ENCODE measurements at regions of chr16 and their contacts with region 1.

Region 1: DNA sequence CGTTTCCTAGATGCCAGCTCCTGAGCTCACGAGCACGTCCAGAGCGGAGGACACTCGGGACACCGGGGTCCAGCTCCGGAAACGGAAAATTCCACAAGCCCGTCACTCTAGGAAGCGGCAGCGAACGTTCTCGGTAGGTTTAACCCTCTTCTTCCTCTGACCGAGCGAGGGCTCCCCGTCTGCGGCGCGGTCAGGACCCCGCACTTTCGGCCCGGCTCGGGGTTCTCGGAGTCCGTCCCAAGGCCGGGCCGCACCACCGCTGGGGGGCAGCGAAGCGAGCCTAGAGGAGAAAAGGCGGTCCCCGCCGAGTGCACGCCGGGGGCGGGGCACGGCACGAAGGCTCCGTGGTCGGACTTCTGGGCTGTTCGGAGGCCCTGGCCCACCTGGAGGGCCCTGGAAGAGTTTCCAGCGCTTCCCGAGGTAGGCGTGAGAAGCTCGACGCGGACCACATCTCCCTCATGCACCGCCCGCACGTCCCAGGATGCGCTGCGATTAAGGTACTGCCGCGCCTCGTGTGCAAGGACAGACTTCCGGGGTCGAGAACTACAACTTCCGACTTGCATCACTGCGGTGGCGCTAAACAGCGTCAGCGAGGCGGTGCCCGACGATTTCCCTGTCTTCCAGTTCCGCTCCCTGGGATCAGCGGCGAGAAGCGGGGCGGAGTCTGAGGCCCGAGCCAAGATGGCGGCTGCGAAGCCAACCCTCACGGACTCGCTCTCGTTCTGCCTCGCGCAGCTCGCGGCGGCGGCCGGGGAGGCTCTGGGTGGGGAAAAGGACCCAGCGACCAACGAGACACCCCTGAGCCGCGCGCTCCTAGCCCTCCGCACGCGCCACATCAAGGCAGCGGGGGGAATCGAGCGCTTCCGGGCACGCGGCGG is at the start of gene ARMC5:
- DNase-seq: peak; percentile 98
- H3K4me3 Mint-ChIP-seq: peak within 1 kb of the TSS; percentile 92
- H3K27ac Mint-ChIP-seq: peak within 1 kb of the TSS; percentile 92
- H3K4me1 Mint-ChIP-seq: peaks cover 48% of the 10 kb centered on the region
- H3K27me3 Mint-ChIP-seq: no peaks in the 10 kb centered on the region
- total RNA-seq, gene ARMC5: 10.1 to 12.0 TPM

Region 2: GRCh38 chr16:31073968-31074813 is 384.9 kb before region 1 on chr16 and contains the starts of genes ZNF646 and ZNF668:
- CTCF ChIA-PET with region 1: interaction called, 3 read pairs
- POLR2A ChIA-PET with region 1: interaction called, 14 read pairs
- DNase-seq: peak; percentile 99
- H3K4me3 Mint-ChIP-seq: peak within 1 kb of the TSS; percentile 97
- H3K27ac Mint-ChIP-seq: peak within 1 kb of the TSS; percentile 94
- H3K4me1 Mint-ChIP-seq: peaks cover 39% of the 10 kb centered on the region
- H3K27me3 Mint-ChIP-seq: no peaks in the 10 kb centered on the region
- total RNA-seq, gene ZNF646: 31.9 to 32.1 TPM
- total RNA-seq, gene ZNF668: 13.9 to 17.4 TPM

Region 3: DNA sequence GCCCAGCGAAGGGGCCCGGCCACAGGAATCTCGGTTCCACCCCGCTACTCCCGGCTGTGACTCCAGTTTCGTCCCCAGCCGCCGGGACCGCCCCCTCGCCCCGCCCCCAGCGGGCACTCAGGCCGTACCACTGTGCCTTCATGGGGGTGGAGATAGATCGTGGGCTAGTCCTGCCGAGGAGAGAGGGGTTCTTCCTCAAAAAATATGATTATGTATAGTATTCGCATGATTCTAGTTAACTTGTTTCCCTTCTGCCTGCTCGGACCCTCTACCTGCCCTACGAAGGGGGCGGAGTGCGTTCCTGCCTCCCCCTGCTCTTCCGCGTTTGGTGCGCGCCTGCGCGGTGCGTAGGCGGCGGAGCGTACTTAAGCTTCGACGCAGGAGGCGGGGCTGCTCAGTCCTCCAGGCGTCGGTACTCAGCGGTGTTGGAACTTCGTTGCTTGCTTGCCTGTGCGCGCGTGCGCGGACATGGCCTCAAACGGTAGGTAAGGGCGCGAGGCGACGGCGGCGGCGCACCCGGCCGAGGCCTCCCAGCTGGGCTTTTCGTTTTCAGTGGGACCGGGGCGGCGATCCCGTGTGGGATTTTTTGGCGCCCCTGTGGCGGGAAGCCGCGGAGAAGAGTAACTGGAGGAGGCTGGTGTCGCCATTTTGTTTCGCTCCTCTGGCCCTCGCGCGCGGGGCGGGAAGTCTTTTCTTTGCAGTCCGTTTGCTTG is 279.2 kb before region 1 on chr16 and contains the start of gene FUS:
- CTCF ChIA-PET with region 1: interaction called, 3 read pairs
- POLR2A ChIA-PET with region 1: interaction called, 66 read pairs
- DNase-seq: peak; percentile 91
- H3K4me3 Mint-ChIP-seq: peak within 1 kb of the TSS; percentile 93
- H3K27ac Mint-ChIP-seq: peak within 1 kb of the TSS; percentile 98
- H3K4me1 Mint-ChIP-seq: peaks cover 53% of the 10 kb centered on the region
- H3K27me3 Mint-ChIP-seq: peaks cover 2% of the 10 kb centered on the region
- total RNA-seq, gene FUS: 386 to 397 TPM

Region 4: GRCh38 chr16:31344712-31345111 is 114.4 kb before region 1 on chr16:
- CTCF ChIA-PET with region 1: no interaction called
- POLR2A ChIA-PET with region 1: no interaction called
- DNase-seq: peak; percentile 38
- H3K4me3 Mint-ChIP-seq: no peak overlapping the region
- H3K27ac Mint-ChIP-seq: no peak overlapping the region
- H3K4me1 Mint-ChIP-seq: peaks cover 21% of the 10 kb centered on the region
- H3K27me3 Mint-ChIP-seq: peaks cover 49% of the 10 kb centered on the region

Region 5: DNA sequence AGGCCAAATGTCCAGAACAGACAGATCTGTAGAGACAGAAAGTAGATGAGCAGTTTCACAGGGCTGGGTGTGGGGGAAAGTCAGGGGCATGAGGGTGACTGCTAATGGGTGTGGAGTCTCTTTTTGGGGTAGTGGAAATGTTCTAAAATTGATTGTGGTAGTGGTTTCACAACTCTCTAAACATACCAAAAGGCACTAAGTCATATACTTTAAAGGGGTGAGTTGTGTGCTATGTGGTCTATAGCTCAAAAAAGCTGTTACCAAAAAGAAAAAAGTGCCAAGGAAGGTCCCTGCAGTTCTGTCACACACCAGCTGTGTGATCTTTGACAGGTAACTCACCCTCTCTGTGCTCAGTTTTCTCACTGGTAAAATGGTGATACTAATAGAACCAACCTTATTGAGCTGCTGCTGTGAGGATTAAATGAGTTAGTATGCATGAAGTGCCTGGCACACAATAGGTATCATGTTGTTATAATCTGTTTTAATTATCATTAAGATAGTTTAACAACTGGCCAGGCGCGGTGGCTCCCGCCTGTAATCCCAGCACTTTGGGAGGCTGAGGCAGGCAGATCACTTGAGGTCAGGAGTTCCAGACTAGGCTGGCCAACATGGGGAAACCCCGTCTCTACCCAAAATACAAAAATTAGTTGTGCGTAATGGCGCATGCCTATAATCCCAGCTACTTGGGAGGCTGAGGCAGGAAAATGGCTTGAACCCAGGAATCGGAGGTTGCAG is 93.8 kb before region 1 on chr16:
- CTCF ChIA-PET with region 1: no interaction called
- POLR2A ChIA-PET with region 1: no interaction called
- DNase-seq: no peak
- H3K4me3 Mint-ChIP-seq: no peak overlapping the region
- H3K27ac Mint-ChIP-seq: peak overlapping the region; percentile 36
- H3K4me1 Mint-ChIP-seq: peaks cover 31% of the 10 kb centered on the region
- H3K27me3 Mint-ChIP-seq: no peaks in the 10 kb centered on the region

Region 6: GRCh38 chr16:31440516-31441184 is 18.4 kb before region 1 on chr16:
- CTCF ChIA-PET with region 1: interaction called, 14 read pairs
- POLR2A ChIA-PET with region 1: interaction called, 14 read pairs
- DNase-seq: no peak
- H3K4me3 Mint-ChIP-seq: no peak overlapping the region
- H3K27ac Mint-ChIP-seq: no peak overlapping the region
- H3K4me1 Mint-ChIP-seq: peaks cover 26% of the 10 kb centered on the region
- H3K27me3 Mint-ChIP-seq: no peaks in the 10 kb centered on the region

Region 7: GRCh38 chr16:31487720-31488467 is 28.8 kb after region 1 on chr16:
- CTCF ChIA-PET with region 1: interaction called, 10 read pairs
- POLR2A ChIA-PET with region 1: interaction called, 4 read pairs
- DNase-seq: peak; percentile 66
- H3K4me3 Mint-ChIP-seq: peak overlapping the region; percentile 80
- H3K27ac Mint-ChIP-seq: no peak overlapping the region
- H3K4me1 Mint-ChIP-seq: peaks cover 12% of the 10 kb centered on the region
- H3K27me3 Mint-ChIP-seq: peaks cover 7% of the 10 kb centered on the region

Region 8: DNA sequence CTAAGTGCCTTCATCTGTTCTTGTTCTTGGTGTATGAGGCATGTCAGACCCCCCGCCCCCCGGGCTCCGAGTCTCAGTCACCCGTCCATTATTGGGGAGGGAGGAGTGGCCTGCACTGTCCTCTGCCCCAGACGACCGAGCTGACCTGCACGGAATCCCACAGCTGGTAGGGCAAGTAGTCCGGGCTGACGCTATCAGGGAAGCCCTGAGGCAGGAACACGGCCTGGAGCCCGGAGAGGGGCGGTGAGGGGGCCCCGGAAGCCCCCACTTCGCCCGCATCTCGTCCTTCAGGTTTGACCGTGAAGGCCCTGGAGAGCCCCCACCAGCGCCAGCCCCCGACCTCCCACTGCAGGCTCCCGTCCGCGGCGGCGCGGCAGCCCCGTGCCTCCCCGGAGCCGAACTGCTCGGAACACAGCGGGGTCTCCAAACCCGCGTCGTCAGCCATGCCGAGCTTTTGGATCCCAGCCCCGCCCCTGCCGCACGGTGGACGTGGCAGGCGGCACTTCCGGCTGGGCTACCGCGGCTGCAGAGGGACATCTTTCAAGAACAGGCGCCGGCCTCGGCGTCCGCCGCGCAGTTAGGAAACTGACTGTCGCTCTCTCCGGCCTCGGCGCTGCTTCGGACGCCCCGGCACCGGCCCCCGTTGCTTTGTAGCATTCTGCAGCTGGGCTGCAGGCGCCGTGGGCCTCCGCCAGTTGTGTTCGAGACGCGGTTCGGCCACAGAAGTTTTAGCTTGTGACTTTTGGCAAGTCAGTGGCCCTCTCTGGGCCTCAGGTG is 49.0 kb after region 1 on chr16 and contains the start of gene RUSF1:
- CTCF ChIA-PET with region 1: interaction called, 13 read pairs
- POLR2A ChIA-PET with region 1: interaction called, 30 read pairs
- DNase-seq: peak; percentile 89
- H3K4me3 Mint-ChIP-seq: peak within 1 kb of the TSS; percentile 91
- H3K27ac Mint-ChIP-seq: peak within 1 kb of the TSS; percentile 91
- H3K4me1 Mint-ChIP-seq: peaks cover 45% of the 10 kb centered on the region
- H3K27me3 Mint-ChIP-seq: no peaks in the 10 kb centered on the region
- total RNA-seq, gene RUSF1: 36.8 to 37.9 TPM

Region 9: DNA sequence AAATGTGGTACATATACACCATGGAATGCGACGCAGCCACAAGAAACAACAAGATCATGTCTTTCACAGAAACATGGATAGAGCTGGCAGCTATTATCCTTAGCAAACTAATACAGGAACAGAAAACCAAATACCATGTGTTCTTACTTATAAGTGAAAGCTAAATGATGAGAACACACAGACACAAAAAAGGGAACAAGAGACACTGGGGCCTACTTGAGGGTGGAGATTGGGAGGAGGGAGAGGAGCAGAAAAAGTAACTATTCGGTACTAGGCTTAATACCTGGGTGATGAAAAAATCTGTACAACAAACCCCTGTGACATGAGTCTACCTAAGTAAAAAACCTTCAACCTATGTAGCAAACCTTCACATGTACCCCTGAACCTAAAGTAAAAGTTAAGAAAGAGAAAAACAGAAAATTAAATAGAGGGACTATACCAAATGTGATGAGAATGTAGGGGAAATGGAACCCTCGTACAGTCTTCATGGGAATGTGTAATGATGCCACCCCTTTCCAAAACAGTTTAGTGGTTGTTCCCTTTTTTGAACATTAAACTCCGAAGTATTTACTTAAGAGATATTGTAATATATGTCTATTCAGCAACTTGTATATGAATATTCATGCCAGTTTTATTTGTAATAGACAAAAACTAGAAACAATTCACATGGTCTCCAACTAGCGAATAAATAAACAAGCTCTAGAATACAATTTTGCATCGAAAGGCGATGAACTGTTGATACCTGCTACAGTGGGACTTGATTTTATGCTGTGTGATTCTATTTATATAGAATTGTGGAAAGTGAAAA is 102.5 kb after region 1 on chr16:
- CTCF ChIA-PET with region 1: no interaction called
- POLR2A ChIA-PET with region 1: no interaction called
- DNase-seq: no peak
- H3K4me3 Mint-ChIP-seq: no peak overlapping the region
- H3K27ac Mint-ChIP-seq: no peak overlapping the region
- H3K4me1 Mint-ChIP-seq: no peaks in the 10 kb centered on the region
- H3K27me3 Mint-ChIP-seq: no peaks in the 10 kb centered on the region

Region 10: DNA sequence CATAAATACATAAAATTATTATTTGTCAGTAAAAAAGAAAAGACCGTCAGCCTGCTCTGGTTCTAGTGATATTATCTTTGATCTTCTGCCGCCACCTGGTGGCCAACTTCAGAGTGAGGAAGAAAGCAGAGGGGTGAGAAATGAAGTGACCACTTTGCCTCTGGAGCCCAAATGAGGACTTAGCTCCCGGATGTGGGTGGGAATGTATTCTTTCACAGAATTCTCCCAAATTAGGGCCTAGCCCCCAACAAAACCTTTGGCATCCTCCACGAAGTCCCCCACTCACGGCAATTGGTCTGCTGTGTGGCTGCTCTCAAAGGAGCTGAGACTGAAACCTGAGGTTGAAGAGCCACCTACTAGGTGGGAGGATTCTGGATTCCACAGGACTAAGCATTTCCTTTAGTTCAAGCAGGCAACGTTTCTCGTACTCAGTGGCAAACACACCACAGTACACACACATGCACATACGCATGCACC is 409.6 kb after region 1 on chr16:
- CTCF ChIA-PET with region 1: interaction called, 69 read pairs
- POLR2A ChIA-PET with region 1: interaction called, 63 read pairs
- DNase-seq: peak; percentile 84
- H3K4me3 Mint-ChIP-seq: peak overlapping the region; percentile 61
- H3K27ac Mint-ChIP-seq: peak overlapping the region; percentile 81
- H3K4me1 Mint-ChIP-seq: peaks cover 60% of the 10 kb centered on the region
- H3K27me3 Mint-ChIP-seq: no peaks in the 10 kb centered on the region